ENCODE measurements at regions of chr2 and their contacts with region 1.

Region 1: DNA sequence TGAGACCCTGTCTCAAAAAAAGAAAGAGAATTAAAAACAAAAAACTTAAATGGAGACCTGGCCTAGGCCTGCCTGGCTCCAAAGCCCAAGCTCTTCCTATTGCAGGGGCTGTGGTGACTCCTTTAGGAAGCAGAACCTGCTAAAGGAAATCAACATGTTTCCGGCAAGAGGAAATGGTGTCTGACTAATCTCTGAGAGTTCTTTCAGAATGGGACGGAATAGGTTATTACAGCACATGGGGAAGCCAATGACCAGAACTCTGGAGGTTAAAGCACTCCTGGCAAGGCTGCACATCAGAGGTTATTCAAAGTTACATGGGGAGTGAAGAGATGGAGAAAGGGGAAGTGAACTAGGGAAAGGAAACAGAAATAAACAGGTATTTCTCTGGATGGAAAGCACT is 21.4 kb downstream of the KIF3C start:
- DNase-seq: peak; percentile 95
- H3K4me3 ChIP-seq: no peak overlapping the region
- H3K27ac ChIP-seq: peak overlapping the region; percentile 58
- H3K4me1 ChIP-seq: peaks cover 28% of the 10 kb centered on the region
- H3K27me3 ChIP-seq: no peaks in the 10 kb centered on the region
- CTCF ChIP-seq: no peak
- POLR2A ChIP-seq: no peak

Region 2: DNA sequence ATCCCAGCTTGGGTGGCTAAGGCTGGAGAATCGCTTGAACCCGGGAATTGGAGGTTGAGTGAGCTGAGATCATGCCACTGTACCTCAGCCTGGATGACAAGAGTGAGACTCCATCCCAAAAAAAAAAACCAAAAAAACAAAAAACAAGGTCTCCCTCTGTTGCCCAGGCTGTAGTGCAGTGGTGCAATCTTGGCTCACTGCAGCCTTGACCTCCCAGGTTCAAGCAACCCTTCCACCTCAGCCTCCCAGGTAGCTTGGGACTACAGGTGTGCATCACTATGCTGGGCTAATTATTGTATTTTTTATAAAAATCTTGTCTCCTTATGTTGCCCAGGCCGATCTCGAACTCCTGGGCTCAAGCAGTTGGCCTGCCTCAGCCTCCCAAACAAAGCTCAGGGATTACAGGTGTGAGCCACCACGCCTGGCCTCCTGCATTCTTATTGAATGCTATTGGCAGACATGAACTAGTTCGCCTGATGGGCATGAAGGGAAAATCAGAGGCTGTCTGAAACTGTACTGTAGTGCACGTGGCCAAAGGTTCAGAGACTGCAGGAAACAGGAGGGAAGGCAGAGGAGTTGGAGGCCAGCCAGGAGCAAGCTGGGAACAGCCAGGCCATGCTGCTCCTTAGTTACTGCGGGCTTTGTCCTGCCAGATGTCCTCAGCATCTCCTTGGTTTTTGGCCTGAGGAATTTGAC is 66.6 kb before region 1 on chr2:
- CTCF ChIA-PET with region 1: no interaction called
- POLR2A ChIA-PET with region 1: no interaction called
- dilution Hi-C with region 1: no loop called
- intact Hi-C with region 1: no loop called
- DNase-seq: peak; percentile 79
- H3K4me3 ChIP-seq: no peak overlapping the region
- H3K27ac ChIP-seq: no peak overlapping the region
- H3K4me1 ChIP-seq: no peaks in the 10 kb centered on the region
- H3K27me3 ChIP-seq: peaks cover 2% of the 10 kb centered on the region in 2 experiments
- CTCF ChIP-seq: no peak
- POLR2A ChIP-seq: no peak

Region 3: GRCh38 chr2:25976983-25977741 is 16.2 kb after region 1 on chr2:
- CTCF ChIA-PET with region 1: interaction called, 11 read pairs
- POLR2A ChIA-PET with region 1: interaction called, 4 read pairs
- dilution Hi-C with region 1: no loop called
- intact Hi-C with region 1: loop called (anchors 1 kb)
- DNase-seq: peak; percentile 56
- H3K4me3 ChIP-seq: no peak overlapping the region
- H3K27ac ChIP-seq: peak overlapping the region; percentile 4
- H3K4me1 ChIP-seq: peaks cover 46% of the 10 kb centered on the region
- H3K27me3 ChIP-seq: no peaks in the 10 kb centered on the region
- CTCF ChIP-seq: no peak
- POLR2A ChIP-seq: no peak

Region 4: DNA sequence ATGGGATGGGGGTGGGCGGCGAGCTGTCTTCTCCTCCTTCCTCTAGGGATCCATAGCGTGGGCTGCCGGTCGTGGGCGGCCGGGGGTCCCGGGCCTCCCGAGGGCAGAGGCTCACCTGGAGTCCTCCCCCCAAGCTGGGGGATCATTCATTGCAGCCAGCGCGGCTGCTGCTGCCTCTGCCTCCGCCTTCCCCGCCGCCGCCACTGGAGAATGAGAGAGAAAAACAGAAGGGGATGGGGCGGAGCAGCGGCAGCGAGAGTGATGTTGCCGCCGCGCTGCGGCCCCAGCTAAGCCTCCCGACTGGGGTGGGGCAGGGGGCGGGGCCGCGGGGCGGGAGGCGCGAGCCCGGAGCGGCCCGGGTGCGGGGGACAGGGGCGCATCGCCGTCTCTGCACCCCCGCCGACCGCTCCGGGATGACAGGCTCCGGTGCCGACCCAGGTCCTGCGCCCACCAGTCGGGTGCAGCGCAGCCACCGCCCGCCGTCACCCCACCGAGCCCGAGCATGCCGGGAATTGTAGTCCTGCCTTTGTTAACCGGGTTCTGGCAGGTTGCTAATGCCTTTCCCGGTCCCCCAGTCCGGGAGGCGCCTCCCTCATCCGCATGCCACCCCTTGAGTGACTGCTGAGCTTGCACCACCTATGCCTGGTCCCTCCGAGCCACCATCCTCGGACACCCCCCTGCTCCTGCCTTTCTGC is 21.5 kb after region 1 on chr2 and contains the start of gene KIF3C:
- CTCF ChIA-PET with region 1: interaction called, 8 read pairs
- POLR2A ChIA-PET with region 1: interaction called, 4 read pairs
- dilution Hi-C with region 1: no loop called
- intact Hi-C with region 1: loop called (anchors 1 kb)
- DNase-seq: peak; percentile 69
- H3K4me3 ChIP-seq: peak within 1 kb of the TSS; percentile 74 to 96 (median 86)
- H3K27ac ChIP-seq: no peak within 1 kb of the TSS
- H3K4me1 ChIP-seq: peaks cover 37% of the 10 kb centered on the region
- H3K27me3 ChIP-seq: no peaks in the 10 kb centered on the region
- CTCF ChIP-seq: no peak
- POLR2A ChIP-seq: peak; percentile 60
- total RNA-seq, gene KIF3C: 40.7 and 42.1 TPM in 2 replicates

Region 5: DNA sequence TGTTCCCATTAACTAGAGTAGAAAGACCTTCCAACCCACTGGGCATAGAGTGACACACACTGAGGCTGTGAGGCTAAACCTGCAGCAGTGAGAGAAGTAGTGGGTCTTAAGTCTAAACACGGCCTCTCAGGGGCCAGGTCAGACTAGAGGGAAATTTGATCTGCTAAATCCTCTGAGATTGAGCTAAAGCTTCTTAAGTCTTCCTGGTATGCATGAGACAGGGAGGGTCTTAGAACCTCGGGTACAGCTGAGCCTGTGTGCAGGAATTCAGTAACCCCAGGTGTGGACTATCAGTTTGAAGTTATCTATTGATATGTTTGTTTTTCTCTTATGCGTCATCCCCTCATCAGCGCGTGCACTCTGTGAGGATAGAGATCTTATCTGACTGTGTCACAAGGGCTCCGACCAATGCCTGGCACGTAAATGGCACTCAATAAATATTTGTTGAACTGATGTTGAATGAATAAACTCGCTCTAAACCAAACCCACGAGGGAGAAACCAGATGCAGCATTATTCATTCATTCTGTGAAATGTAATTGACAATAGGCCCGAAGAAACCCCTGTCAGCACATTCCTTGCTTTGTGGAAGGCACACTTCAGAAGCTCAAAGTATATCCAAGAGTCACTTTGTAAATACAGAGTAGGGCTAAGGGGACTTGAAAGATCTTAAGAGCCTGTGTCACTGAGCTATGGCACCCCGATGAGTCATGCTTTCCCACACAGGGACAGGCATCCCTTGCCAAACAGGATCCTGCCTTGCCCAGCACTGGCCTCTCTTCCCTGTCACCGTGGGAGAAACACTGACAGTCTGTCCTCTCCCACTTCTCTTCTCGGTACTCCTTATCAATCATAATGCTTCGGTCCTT is 51.3 kb after region 1 on chr2:
- CTCF ChIA-PET with region 1: no interaction called
- POLR2A ChIA-PET with region 1: no interaction called
- dilution Hi-C with region 1: no loop called
- intact Hi-C with region 1: loop called (anchors 2 kb)
- DNase-seq: peak; percentile 39
- H3K4me3 ChIP-seq: no peak overlapping the region
- H3K27ac ChIP-seq: no peak overlapping the region
- H3K4me1 ChIP-seq: peaks cover 20% of the 10 kb centered on the region
- H3K27me3 ChIP-seq: no peaks in the 10 kb centered on the region
- CTCF ChIP-seq: no peak
- POLR2A ChIP-seq: no peak